ENCODE measurements at regions of chr5 and their contacts with region 1.

Region 1: DNA sequence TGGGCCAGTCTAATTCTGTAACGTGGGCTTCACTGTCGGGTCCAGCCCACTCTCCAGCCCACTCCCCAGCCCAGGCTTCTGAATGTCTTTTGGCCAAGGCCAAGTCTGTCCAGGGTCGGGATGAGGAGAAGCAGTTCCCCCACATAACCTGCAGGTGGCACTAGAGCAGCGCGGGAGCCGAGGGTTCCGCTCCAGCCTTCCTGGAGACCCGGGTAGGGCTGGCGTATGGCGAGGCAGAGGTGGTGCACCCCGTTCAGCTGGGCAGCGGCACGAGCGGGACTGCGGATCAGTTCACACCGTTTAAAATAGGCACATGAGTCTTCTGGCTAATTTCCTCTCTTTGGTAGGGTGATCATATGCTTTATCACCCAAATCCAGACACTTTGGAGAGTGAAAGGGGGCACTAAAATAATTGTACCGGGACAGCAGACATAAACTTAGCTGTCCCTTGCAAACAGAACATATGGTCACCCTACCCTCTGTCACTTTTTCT is 185.9 kb downstream of the MSX2 start:
- DNase-seq: peak; percentile 87
- H3K4me3 Mint-ChIP-seq: peak overlapping the region; percentile 15
- H3K27ac Mint-ChIP-seq: no peak overlapping the region
- H3K4me1 Mint-ChIP-seq: no peaks in the 10 kb centered on the region
- H3K27me3 Mint-ChIP-seq: peaks cover 74% of the 10 kb centered on the region
- CTCF ChIP-seq: peak; percentile 96

Region 2: GRCh38 chr5:174816860-174817259 is 93.4 kb before region 1 on chr5:
- CTCF ChIA-PET with region 1: no interaction called
- intact Hi-C with region 1: no loop called
- DNase-seq: peak; percentile 16
- H3K4me3 Mint-ChIP-seq: no peak overlapping the region
- H3K27ac Mint-ChIP-seq: no peak overlapping the region
- H3K4me1 Mint-ChIP-seq: no peaks in the 10 kb centered on the region
- H3K27me3 Mint-ChIP-seq: peaks cover 16% of the 10 kb centered on the region
- CTCF ChIP-seq: peak; percentile 51

Region 3: GRCh38 chr5:174935854-174936474 is 25.7 kb after region 1 on chr5:
- CTCF ChIA-PET with region 1: interaction called, 4 read pairs
- intact Hi-C with region 1: loop called (anchors 1 kb)
- DNase-seq: peak; percentile 82
- H3K4me3 Mint-ChIP-seq: no peak overlapping the region
- H3K27ac Mint-ChIP-seq: no peak overlapping the region
- H3K4me1 Mint-ChIP-seq: no peaks in the 10 kb centered on the region
- H3K27me3 Mint-ChIP-seq: peaks cover 37% of the 10 kb centered on the region
- CTCF ChIP-seq: peak; percentile 89